B cell (primary cell): ENCODE measurements at regions of chr2 and their contacts with region 1.

Region 1: DNA sequence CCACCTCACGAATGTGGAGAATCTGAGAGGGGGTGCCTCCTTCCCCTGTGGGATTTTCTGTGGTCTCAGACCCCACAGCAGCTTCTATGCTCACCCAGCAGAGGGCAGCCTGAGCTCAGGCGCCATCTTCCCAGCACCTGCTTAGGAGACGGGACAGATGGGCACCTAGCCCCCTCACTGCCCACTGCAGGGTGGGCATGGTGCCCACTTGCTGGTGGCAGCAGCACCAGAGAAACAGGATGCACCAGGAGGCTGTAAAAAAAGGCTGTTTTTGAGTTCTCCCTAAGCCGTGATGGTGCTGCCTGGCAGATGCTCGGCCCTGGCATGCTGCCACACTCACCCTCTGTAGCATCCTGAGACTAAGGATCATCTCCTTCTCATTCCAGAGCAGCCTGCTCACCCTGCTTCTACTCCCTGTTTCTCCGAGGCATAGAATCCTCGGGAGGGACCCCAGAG is 19.1 kb upstream of the SLC20A1 start:
- DNase-seq: peak; percentile 82
- ATAC-seq: peak; percentile 79
- H3K4me3 ChIP-seq: peak overlapping the region in 3 of 5 experiments; percentile 39 to 59 (median 46)
- H3K4me3 Mint-ChIP-seq: peak overlapping the region; percentile 56
- H3K27ac ChIP-seq: no peak overlapping the region
- H3K27ac Mint-ChIP-seq: no peak overlapping the region
- H3K4me1 ChIP-seq: peaks cover 15 to 39% of the 10 kb centered on the region in 2 donors
- H3K4me1 Mint-ChIP-seq: peaks cover 23% of the 10 kb centered on the region
- H3K27me3 ChIP-seq: no peaks in the 10 kb centered on the region
- H3K27me3 Mint-ChIP-seq: no peaks in the 10 kb centered on the region
- CTCF ChIP-seq: peak; percentile 89

Region 2: DNA sequence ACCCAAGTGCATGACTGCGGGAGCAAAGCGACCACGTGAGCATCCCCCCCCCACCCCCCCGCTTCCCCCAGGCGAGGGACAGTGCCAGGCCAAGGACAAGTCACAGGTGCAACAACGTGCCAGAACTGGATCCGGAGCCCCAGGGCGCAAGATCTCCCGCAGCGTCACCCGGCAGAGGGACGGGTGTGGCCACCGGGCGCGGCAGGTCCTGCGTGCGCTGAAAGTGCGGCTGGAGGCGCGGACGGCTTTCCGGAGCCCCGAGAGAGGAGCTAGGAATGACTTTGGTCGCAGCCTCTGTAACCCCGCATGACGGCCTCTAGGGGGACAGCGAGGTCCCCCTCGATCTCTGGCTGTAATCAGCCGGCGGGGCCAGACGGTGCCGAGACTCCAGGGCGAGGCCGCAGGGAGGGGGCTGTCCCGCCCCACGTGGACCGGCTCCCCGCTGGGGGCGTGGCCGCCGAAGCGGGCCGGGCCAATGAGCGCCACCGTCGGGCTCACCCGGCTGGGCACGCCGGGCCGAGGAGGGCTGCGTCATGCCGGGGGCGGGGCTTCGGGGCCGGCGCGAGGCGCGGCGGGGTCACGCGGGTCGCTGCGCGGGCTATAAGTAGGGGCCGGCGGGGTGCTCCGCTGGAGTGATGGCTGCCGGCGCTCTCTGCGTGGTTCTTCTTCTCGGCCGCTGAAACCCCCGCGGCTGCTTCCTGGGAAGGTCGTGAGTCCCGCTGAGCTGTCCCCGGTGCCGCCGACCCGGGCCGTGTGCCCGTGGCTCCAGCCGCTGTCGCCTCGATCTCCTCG is 18.9 kb after region 1 on chr2 and contains the start of gene SLC20A1:
- CTCF ChIA-PET with region 1: interaction called, 48 read pairs
- POLR2A ChIA-PET with region 1: interaction called, 10 read pairs
- intact Hi-C with region 1: loop called (anchors 2 kb)
- DNase-seq: peak; percentile 98
- ATAC-seq: peak; percentile 93
- H3K4me3 ChIP-seq: peak within 1 kb of the TSS; percentile 65 to 98 (median 90)
- H3K4me3 Mint-ChIP-seq: peak within 1 kb of the TSS; percentile 94
- H3K27ac ChIP-seq: peak within 1 kb of the TSS; percentile 90 to 96
- H3K27ac Mint-ChIP-seq: peak within 1 kb of the TSS; percentile 90
- H3K4me1 ChIP-seq: peaks cover 15 to 20% of the 10 kb centered on the region in 2 donors
- H3K4me1 Mint-ChIP-seq: peaks cover 26% of the 10 kb centered on the region
- H3K27me3 ChIP-seq: no peaks in the 10 kb centered on the region
- H3K27me3 Mint-ChIP-seq: no peaks in the 10 kb centered on the region
- CTCF ChIP-seq: peak; percentile 69
- total RNA-seq, gene SLC20A1: 54.9 and 57.1 TPM in 2 replicates

Region 3: GRCh38 chr2:112692496-112692911 is 65.9 kb after region 1 on chr2:
- CTCF ChIA-PET with region 1: interaction called, 114 read pairs
- POLR2A ChIA-PET with region 1: interaction called, 3 read pairs
- intact Hi-C with region 1: loop called (anchors 1 kb)
- DNase-seq: no peak
- ATAC-seq: no peak
- H3K4me3 ChIP-seq: no peak overlapping the region
- H3K4me3 Mint-ChIP-seq: no peak overlapping the region
- H3K27ac ChIP-seq: no peak overlapping the region
- H3K27ac Mint-ChIP-seq: no peak overlapping the region
- H3K4me1 ChIP-seq: peaks cover 0 to 23% of the 10 kb centered on the region in 2 donors
- H3K4me1 Mint-ChIP-seq: peaks cover 17% of the 10 kb centered on the region
- H3K27me3 ChIP-seq: no peaks in the 10 kb centered on the region
- H3K27me3 Mint-ChIP-seq: no peaks in the 10 kb centered on the region
- CTCF ChIP-seq: no peak

Region 4: DNA sequence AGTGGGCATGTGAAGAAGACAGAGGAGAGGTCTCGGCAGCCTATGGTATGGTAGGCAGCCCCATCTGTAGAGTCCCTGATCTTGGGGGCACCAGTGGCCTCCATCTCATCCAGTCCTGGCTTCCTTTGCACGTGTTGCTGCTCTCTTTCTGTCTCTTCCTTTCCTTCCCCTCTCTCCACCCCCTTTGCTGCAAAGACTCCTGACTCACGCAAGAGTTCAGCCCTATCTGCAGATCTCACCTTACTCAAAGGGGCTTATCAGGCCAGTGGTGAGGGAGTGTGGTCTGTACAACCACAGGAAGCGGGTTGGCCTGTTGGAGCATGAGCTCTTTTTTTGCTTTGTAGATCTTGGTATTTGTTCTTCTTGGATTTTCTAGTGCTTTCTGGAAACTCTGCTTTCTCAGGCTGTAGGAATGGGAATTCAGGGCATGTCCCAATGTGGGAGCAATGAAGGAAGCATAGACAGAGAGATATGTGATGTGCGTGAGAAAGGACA is 79.6 kb after region 1 on chr2:
- CTCF ChIA-PET with region 1: interaction called, 13 read pairs
- POLR2A ChIA-PET with region 1: interaction called, 5 read pairs
- intact Hi-C with region 1: no loop called
- DNase-seq: peak; percentile 45
- ATAC-seq: peak; percentile 28
- H3K4me3 ChIP-seq: no peak overlapping the region
- H3K4me3 Mint-ChIP-seq: peak overlapping the region; percentile 32
- H3K27ac ChIP-seq: no peak overlapping the region
- H3K27ac Mint-ChIP-seq: peak overlapping the region; percentile 81
- H3K4me1 ChIP-seq: peaks cover 58 to 73% of the 10 kb centered on the region in 2 donors
- H3K4me1 Mint-ChIP-seq: peaks cover 72% of the 10 kb centered on the region
- H3K27me3 ChIP-seq: no peaks in the 10 kb centered on the region
- H3K27me3 Mint-ChIP-seq: no peaks in the 10 kb centered on the region
- CTCF ChIP-seq: no peak

Region 5: GRCh38 chr2:112794131-112794733 is 167.6 kb after region 1 on chr2:
- CTCF ChIA-PET with region 1: no interaction called
- POLR2A ChIA-PET with region 1: no interaction called
- intact Hi-C with region 1: no loop called
- DNase-seq: peak; percentile 27
- ATAC-seq: peak; percentile 47
- H3K4me3 ChIP-seq: no peak overlapping the region
- H3K4me3 Mint-ChIP-seq: no peak overlapping the region
- H3K27ac ChIP-seq: no peak overlapping the region
- H3K27ac Mint-ChIP-seq: no peak overlapping the region
- H3K4me1 ChIP-seq: peaks cover 0 to 2% of the 10 kb centered on the region in 2 donors
- H3K4me1 Mint-ChIP-seq: peaks cover 10% of the 10 kb centered on the region
- H3K27me3 ChIP-seq: no peaks in the 10 kb centered on the region
- H3K27me3 Mint-ChIP-seq: no peaks in the 10 kb centered on the region
- CTCF ChIP-seq: no peak

Region 6: GRCh38 chr2:112958428-112959108 is 331.9 kb after region 1 on chr2:
- CTCF ChIA-PET with region 1: no interaction called
- POLR2A ChIA-PET with region 1: no interaction called
- intact Hi-C with region 1: loop called (anchors 2 kb)
- DNase-seq: peak; percentile 61
- ATAC-seq: peak; percentile 67
- H3K4me3 ChIP-seq: no peak overlapping the region
- H3K4me3 Mint-ChIP-seq: no peak overlapping the region
- H3K27ac ChIP-seq: no peak overlapping the region
- H3K27ac Mint-ChIP-seq: no peak overlapping the region
- H3K4me1 ChIP-seq: no peaks in the 10 kb centered on the region
- H3K4me1 Mint-ChIP-seq: no peaks in the 10 kb centered on the region
- H3K27me3 ChIP-seq: peaks cover 0 to 15% (median 0%) of the 10 kb centered on the region in 4 experiments
- H3K27me3 Mint-ChIP-seq: peaks cover 4% of the 10 kb centered on the region
- CTCF ChIP-seq: peak; percentile 88